Tibial artery (tissue), 4 donors: ENCODE measurements at regions of chr20 and their contacts with region 1.

Region 1: DNA sequence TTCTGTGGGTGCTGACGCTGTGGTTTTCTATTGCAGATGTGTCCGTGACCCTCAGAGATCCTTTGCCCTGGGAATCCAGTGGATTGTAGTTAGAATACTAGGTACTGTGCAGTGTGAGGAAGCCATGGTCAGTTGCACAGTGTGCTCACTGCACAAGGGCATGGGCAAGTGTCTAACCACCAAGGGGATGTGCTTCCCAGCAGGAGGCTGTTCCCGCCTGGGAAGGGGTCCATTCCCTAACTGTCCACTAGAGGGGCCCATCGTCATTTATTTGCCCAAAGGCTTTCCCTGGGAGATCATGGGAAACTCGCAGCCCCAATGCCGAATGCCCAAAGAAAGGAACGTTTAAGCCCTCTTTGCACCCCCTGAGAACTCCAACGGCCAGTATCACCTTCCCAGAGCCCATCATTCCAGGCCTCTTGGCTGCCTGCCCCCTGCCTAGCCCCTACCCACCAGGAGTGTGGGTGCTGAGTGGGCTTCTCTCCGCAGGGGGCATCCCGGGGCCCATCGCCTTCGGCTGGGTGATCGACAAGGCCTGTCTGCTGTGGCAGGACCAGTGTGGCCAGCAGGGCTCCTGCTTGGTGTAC is 26.2 kb downstream of the SLCO4A1 start:
- DNase-seq: peak; percentile 62 to 79
- H3K4me3 ChIP-seq: no peak overlapping the region
- H3K27ac ChIP-seq: no peak overlapping the region
- H3K4me1 ChIP-seq: peaks cover 0 to 11% (median 0%) of the 10 kb centered on the region in 4 donors
- H3K27me3 ChIP-seq: peaks cover 0 to 62% of the 10 kb centered on the region in 2 donors
- CTCF ChIP-seq: peak; percentile 74 to 84

Region 2: DNA sequence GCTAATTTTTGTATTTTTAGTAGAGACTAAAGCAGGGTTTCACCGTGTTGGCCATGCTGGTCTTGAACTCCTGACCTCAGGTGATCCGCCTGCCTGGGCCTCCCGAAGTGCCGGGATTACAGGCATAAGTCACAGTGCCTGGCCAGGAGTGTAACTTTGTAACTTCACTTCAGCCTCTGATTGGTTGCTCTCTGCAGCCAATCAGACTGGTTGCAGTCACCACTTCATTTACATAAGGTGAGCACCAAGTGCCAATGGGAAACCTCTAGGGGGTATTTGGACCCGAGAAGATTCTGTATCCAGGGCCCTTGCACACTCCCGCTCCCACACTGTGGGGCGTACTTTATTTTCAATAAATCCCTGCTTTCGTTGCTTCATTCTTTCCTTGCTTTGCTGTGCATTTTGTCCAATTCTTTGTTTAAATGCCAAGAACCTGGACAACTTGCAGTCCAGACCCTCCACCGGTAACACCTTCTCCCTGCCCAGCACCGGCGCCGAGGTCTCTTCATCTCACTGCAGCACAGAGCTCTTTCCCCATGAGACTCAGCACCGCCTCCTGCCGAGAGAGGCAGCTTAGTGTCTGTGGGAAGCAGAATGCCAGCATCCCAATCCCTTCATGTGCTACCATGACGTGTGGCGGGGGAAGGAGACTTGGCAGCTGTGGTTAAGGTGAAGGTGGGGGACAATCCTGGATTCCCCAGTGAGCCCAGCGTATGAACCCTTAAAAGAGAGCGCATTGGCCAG is 113.8 kb after region 1 on chr20:
- intact Hi-C with region 1: loop called (anchors 5 kb)
- DNase-seq: no peak
- H3K4me3 ChIP-seq: no peak overlapping the region
- H3K27ac ChIP-seq: no peak overlapping the region
- H3K4me1 ChIP-seq: no peaks in the 10 kb centered on the region
- H3K27me3 ChIP-seq: peaks cover 0 to 72% of the 10 kb centered on the region in 2 donors
- CTCF ChIP-seq: no peak

Region 3: GRCh38 chr20:62808211-62808865 is 139.8 kb after region 1 on chr20:
- intact Hi-C with region 1: loop called (anchors 5 kb)
- DNase-seq: peak; percentile 55 to 81
- H3K4me3 ChIP-seq: no peak overlapping the region
- H3K27ac ChIP-seq: no peak overlapping the region
- H3K4me1 ChIP-seq: peaks cover 0 to 39% (median 26%) of the 10 kb centered on the region in 4 donors
- H3K27me3 ChIP-seq: no peaks in the 10 kb centered on the region
- CTCF ChIP-seq: peak; percentile 85 to 93

Region 4: DNA sequence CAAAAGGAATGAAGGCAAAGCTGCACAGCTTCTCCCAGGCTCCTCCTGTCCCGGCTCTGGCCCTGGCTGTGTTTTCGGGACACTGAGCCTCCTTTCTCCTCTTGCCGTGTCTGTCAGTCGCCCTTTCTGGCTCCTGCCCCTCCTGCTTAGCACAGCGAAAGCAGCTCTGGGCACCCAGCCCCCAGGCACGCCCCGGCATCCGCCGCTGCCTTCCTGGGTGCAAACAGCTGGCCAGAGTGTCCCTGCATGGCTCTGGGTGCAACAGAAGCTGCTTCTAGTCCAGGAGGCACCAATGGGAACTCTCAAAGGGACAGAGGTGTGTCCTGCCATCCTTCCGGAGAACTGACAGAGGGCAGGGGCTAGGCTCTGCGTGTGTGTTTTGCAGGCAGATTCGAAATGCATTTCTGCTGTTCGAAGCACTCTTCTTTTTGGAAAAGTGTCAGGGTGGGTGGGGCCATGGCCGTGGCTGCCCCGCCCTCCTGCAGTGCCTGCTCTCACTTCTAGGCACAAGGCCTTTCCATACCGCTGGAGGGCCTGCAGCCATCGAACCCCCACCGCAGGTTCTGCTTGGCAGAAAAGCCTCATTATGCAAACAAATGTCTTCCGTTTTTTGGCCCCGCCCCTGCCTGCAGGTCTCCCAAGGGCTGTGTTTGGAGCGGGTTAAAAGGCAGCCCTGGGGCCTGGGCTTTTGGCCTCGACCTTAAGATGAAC is 163.8 kb after region 1 on chr20:
- intact Hi-C with region 1: no loop called
- DNase-seq: no peak
- H3K4me3 ChIP-seq: no peak overlapping the region
- H3K27ac ChIP-seq: no peak overlapping the region
- H3K4me1 ChIP-seq: peaks cover 0 to 18% (median 0%) of the 10 kb centered on the region in 4 donors
- H3K27me3 ChIP-seq: peaks cover 0 to 42% of the 10 kb centered on the region in 2 donors
- CTCF ChIP-seq: no peak

Region 5: DNA sequence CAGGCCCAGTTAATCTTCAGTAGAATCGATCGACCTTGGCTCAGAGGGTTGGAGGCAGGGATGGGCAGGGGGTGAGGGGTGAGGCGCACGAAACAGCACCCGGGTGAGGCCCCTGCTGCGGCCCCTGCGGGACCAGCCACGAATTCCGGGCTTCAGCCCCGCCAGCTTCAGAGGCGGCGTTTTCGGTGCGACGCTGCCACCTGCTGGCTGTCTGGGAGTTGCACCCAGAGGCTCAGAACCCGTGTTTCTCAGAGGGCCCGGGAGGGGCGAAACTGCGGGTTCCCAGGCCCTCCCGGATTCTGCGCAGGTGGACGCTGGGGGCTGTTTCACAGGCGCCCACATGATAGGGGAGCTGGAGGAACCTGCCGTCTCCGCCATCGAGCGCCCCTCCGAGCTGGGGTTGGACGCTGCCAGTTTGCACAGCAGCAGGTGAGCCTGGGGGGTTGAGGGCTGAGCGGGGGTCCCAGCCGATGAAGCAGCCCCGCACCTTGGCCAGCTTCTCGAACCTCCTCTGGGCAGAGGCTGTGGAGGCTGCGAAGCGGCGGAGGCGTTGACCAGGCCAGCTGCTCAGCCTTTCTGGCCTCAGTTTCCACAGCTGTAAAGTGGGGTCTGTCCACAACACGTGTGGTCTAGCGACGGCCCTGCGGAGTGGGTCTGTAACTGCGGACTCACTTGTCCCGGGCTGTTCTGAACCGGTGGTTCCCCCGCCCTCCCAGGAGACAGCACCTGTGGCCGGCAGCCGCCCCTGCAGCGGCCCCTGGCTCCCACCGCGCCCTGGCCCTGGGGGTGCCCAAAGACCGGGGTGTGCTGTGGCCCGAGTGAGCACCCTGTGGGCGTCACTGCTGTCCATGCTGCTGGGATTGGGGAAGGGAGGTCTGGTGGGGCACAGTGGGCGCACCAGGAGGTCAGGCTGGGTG is 340.8 kb after region 1 on chr20:
- intact Hi-C with region 1: loop called (anchors 10 kb)
- DNase-seq: peak; percentile 38 to 80
- H3K4me3 ChIP-seq: no peak overlapping the region
- H3K27ac ChIP-seq: no peak overlapping the region
- H3K4me1 ChIP-seq: peaks cover 0 to 36% (median 20%) of the 10 kb centered on the region in 4 donors
- H3K27me3 ChIP-seq: peaks cover 15 to 89% of the 10 kb centered on the region in 2 donors
- CTCF ChIP-seq: peak; percentile 92 to 95